Lower leg skin (tissue), 4 donors: ENCODE measurements at regions of chr16 and their contacts with region 1.

Region 1: DNA sequence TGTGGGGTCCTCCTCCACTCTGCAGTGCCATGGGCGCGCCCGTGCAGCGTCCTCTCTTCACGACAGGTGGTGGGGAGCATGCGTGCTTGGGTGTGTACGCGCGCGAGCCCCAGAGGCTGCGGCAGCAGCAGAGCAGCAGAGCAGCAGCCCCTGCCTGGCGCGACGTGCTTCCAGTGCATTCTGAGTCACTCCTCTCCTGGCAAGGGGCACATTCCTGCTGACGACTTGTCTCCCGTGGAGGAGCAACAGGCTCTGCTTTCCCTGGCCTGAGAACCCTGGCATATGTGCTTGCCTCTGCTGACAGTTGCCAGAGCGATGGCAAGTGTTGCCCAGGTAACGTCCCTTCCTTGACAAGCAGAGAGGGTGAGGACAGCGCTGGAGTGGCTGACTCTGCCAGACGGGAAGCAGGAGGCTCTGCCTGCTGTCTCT is 133.8 kb upstream of the PLCG2 start:
- DNase-seq: peak; percentile 60 to 92
- H3K4me3 ChIP-seq: no peak overlapping the region
- CTCF ChIP-seq: no peak
- POLR2A ChIP-seq: no peak

Region 2: DNA sequence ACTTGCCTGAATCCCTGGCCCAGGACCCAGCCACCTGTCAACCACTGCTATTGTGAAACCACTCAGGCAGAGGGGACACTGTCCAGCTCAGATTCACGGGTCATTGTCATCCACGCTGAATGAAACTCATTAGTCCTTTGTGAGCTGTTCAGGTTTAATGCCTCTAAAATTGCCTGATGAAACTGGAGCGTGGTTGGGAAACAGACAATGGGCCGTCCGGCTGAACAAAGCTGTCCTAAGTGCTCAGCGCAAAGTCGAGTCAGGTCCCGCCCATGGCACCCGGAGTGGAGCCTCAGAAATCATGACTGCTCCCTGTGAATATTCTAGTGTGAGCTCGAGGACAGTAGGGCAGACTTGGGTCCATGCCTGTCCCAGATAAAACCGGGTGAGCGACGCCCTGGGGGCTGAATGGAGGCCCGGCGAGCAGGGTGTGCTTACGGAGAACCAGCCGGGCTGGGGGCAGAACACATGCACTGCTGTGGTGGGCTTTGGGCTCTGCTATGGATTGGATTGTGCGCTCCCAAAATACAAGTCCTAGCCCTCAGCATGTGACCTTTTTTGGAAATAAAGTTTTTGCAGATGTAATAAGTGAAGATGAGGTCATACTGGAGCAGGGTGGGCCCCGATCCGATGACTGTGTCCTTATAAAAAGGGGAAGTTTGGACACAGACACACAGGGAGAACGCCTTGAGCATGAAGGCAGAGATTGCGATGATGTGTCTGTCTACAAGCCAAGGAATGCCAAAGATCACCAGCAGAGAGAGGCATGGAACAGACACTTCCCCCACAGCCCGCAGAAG is 213.5 kb before region 1 on chr16:
- intact Hi-C with region 1: loop called (anchors 10 kb)
- DNase-seq: peak in 1 of 2 donors; percentile 40
- H3K4me3 ChIP-seq: no peak overlapping the region
- CTCF ChIP-seq: no peak
- POLR2A ChIP-seq: no peak